ENCODE measurements at regions of chr3 and their contacts with region 1.

Region 1: DNA sequence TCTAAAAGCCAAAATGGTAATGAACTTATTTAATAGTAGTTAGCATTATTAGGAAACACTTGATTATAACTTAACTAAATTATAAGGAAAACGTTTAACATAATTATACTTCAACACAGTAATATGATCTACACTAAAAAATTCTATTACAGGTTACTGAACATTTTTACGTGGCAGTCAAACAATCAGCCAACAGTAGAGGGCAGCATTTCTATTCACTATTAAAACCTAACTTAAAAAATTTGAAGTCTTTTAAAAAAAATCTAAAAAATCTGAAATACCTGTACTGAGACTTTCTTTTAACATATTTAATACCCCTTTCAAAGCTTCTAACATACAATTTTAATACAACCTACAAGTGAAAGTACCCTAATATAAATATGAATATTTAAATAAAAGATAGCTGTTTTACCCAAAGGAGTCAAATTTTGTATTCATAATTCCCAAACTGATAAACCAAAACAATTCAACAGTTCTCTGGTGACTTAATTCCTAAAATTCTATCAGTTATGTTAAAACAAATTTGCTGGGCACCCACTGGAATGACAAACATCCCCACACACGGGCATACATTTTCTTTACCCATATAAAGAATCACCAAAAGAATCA is 41.5 kb downstream of the DLG1 start:
- H3K4me3 Mint-ChIP-seq: no peak overlapping the region
- H3K27ac Mint-ChIP-seq: no peak overlapping the region
- H3K4me1 Mint-ChIP-seq: peaks cover 7% of the 10 kb centered on the region
- H3K27me3 Mint-ChIP-seq: no peaks in the 10 kb centered on the region

Region 2: GRCh38 chr3:197305854-197306253 is 48.9 kb after region 1 on chr3:
- intact Hi-C with region 1: no loop called
- H3K4me3 Mint-ChIP-seq: no peak overlapping the region
- H3K27ac Mint-ChIP-seq: no peak overlapping the region
- H3K4me1 Mint-ChIP-seq: no peaks in the 10 kb centered on the region
- H3K27me3 Mint-ChIP-seq: peaks cover 31% of the 10 kb centered on the region

Region 3: DNA sequence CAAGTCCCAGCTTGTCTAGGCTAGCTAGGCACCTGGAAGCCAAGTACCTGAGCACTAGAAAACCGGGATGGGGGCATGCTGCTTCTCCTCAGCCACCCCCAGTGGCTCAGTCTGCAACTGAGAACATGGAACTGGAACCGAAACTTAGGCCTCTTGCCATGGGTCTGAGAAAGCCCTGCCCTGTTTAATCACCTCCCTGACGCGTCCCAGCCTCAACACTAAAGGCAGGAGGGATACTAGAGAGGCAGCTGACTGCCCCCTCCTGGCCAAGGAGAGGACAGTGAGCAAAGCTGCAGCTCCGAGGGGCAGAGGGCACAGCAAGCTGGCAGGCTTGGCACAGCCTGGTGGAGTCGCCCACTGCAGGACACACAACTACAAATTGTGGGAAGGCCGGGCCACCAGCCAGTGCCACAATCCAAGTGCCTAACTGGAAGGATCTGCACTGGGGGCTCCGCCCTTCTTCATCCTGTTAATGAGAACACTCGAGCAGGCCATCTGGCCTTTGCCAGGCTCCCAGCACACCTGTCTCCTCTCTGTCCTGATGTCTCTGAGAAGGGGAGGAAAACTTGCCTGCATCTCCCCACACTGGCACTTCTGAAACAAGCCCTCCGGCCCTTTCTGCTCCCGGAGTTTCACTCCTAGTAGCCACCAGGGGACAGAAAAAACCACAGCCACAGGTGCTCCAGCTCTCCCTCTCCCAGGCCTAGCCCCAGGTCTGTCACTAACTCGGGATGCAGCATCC is 245.1 kb after region 1 on chr3:
- intact Hi-C with region 1: loop called (anchors 2 kb)
- H3K4me3 Mint-ChIP-seq: no peak overlapping the region
- H3K27ac Mint-ChIP-seq: no peak overlapping the region
- H3K4me1 Mint-ChIP-seq: peaks cover 16% of the 10 kb centered on the region
- H3K27me3 Mint-ChIP-seq: peaks cover 3% of the 10 kb centered on the region

Region 4: GRCh38 chr3:197511130-197511529 is 254.2 kb after region 1 on chr3:
- intact Hi-C with region 1: loop called (anchors 2 kb)
- H3K4me3 Mint-ChIP-seq: no peak overlapping the region
- H3K27ac Mint-ChIP-seq: no peak overlapping the region
- H3K4me1 Mint-ChIP-seq: peaks cover 8% of the 10 kb centered on the region
- H3K27me3 Mint-ChIP-seq: peaks cover 7% of the 10 kb centered on the region

Region 5: GRCh38 chr3:197580253-197580691 is 323.3 kb after region 1 on chr3:
- intact Hi-C with region 1: no loop called
- H3K4me3 Mint-ChIP-seq: no peak overlapping the region
- H3K27ac Mint-ChIP-seq: no peak overlapping the region
- H3K4me1 Mint-ChIP-seq: no peaks in the 10 kb centered on the region
- H3K27me3 Mint-ChIP-seq: peaks cover 10% of the 10 kb centered on the region

Measured in dendritic cell treated with granulocyte-macrophage colony-stimulating factor and Interleukin-4, amounts not matched to agents 40 ng/mL and 50 ng/mL, for 4 days (primary cell).